ENCODE measurements at regions of chr17 and their contacts with region 1.

Region 1: DNA sequence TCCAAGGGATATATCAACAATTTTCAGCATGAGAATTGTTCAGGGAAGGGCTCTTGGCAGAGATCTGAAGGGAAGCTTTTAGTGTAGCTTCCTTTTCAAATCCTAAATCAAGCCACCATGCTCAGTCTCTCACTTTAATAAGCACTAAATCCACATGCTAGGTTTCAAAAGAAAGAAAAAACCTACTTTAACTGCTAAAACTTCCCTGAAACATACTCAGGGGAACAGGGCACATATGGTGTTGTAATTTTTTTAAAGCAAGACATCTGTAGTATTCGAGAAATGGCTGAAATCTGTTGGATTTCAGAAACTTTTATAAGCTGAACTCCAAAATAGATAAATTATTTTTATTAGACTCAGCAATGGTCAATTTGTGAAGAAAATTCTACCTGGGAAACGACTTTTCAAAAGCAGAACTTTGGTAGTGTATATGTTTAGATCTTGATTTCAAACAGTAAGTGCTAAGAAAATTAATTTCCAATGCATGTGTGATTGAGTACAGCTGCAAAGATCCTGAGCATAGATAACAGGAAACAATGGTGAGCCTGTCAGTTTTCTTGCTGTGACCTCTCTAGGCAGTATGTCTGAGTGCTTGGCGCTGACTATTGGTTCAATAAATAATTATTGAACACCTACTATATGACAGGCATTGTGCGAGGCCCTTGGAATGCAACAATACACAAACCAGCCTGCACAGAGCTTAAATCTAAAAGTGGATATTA is 804.5 kb upstream of the SOX9 start:
- DNase-seq: no peak
- H3K4me3 ChIP-seq: no peak overlapping the region
- H3K27ac ChIP-seq: no peak overlapping the region
- H3K4me1 ChIP-seq: no peaks in the 10 kb centered on the region
- H3K27me3 ChIP-seq: no peaks in the 10 kb centered on the region
- CTCF ChIP-seq: no peak
- POLR2A ChIP-seq: no peak

Region 2: DNA sequence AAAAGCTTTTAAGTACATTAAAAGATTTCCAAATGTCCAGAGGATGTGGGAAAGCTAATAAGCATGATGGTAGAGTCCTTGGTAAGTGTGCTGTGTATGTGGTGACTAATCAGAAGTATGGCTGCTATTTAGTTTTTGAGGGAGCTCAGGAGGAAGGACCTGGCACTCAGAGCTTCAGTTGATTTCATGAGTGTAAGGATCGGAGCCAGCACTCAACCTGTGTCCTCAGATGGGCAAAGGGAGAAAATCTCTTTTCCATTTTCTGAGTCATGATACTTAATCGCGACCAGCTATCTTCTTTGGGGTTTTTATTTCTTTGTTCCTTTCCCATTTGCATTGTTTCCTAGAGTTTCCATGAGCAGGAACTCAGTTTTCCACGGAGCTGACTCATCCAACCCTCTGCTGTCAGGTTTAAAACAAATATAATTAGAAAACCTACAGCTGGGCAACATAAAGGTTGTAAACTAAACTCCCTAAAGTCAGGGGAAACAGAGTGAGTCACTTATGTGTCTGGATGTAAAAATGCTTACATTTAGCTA is 1776.5 kb before region 1 on chr17:
- intact Hi-C with region 1: loop called (anchors 5 kb)
- DNase-seq: no peak
- H3K4me3 ChIP-seq: no peak overlapping the region
- H3K27ac ChIP-seq: no peak overlapping the region
- H3K4me1 ChIP-seq: no peaks in the 10 kb centered on the region
- H3K27me3 ChIP-seq: no peaks in the 10 kb centered on the region
- CTCF ChIP-seq: no peak
- POLR2A ChIP-seq: no peak

Region 3: DNA sequence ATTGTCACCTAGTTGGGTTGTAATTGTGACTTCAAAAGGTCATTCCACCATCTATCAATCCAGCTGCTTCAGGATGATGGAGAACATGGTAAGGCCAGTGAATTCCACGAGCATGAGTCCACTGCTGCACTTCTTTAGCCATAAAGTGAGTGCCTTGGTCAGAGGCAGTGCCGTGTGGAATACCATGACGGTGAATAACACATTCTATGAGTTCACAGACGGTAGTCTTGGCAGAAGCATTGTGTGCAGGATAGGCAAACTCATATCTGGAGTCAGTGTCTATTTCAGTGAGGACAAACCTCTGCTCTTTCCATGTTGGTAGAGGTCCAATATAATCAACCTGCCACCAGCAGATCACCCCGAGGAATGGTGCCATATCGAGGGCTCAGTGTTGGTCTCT is 496.1 kb before region 1 on chr17:
- intact Hi-C with region 1: loop called (anchors 5 kb)
- DNase-seq: no peak
- H3K4me3 ChIP-seq: no peak overlapping the region
- H3K27ac ChIP-seq: no peak overlapping the region
- H3K4me1 ChIP-seq: no peaks in the 10 kb centered on the region
- H3K27me3 ChIP-seq: no peaks in the 10 kb centered on the region
- CTCF ChIP-seq: no peak
- POLR2A ChIP-seq: no peak

Region 4: GRCh38 chr17:71163121-71163812 is 153.1 kb before region 1 on chr17:
- intact Hi-C with region 1: no loop called
- DNase-seq: no peak
- H3K4me3 ChIP-seq: no peak overlapping the region
- H3K27ac ChIP-seq: no peak overlapping the region
- H3K4me1 ChIP-seq: no peaks in the 10 kb centered on the region
- H3K27me3 ChIP-seq: peaks cover 0 to 8% of the 10 kb centered on the region in 2 donors
- CTCF ChIP-seq: no peak
- POLR2A ChIP-seq: no peak